Ascending aorta (tissue), 2 donors: ENCODE measurements at regions of chr4 and their contacts with region 1.

Region 1: GRCh38 chr4:107183155-107183774 is 147.2 kb upstream of the DKK2 start:
- DNase-seq: no peak
- H3K4me3 ChIP-seq: no peak overlapping the region
- H3K27ac ChIP-seq: no peak overlapping the region
- H3K4me1 ChIP-seq: no peaks in the 10 kb centered on the region
- H3K27me3 ChIP-seq: no peaks in the 10 kb centered on the region
- CTCF ChIP-seq: peak; percentile 62 to 81 (median 74)

Region 2: GRCh38 chr4:106266201-106266600 is 917.1 kb before region 1 on chr4:
- intact Hi-C with region 1: loop called (anchors 5 kb)
- DNase-seq: no peak
- H3K4me3 ChIP-seq: no peak overlapping the region
- H3K27ac ChIP-seq: no peak overlapping the region
- H3K4me1 ChIP-seq: peaks cover 0 to 6% of the 10 kb centered on the region in 2 donors
- H3K27me3 ChIP-seq: no peaks in the 10 kb centered on the region
- CTCF ChIP-seq: peak; percentile 18 to 59 (median 58)

Region 3: GRCh38 chr4:107037199-107037584 is 146.1 kb before region 1 on chr4:
- intact Hi-C with region 1: loop called (anchors 5 kb)
- DNase-seq: peak in 1 of 2 donors; percentile 68
- H3K4me3 ChIP-seq: peak overlapping the region; percentile 49 to 75
- H3K27ac ChIP-seq: no peak overlapping the region
- H3K4me1 ChIP-seq: no peaks in the 10 kb centered on the region
- H3K27me3 ChIP-seq: no peaks in the 10 kb centered on the region
- CTCF ChIP-seq: peak; percentile 25 to 65 (median 54)

Region 4: GRCh38 chr4:107050525-107051135 is 132.6 kb before region 1 on chr4:
- intact Hi-C with region 1: loop called (anchors 5 kb)
- DNase-seq: no peak
- H3K4me3 ChIP-seq: no peak overlapping the region
- H3K27ac ChIP-seq: no peak overlapping the region
- H3K4me1 ChIP-seq: no peaks in the 10 kb centered on the region
- H3K27me3 ChIP-seq: no peaks in the 10 kb centered on the region
- CTCF ChIP-seq: peak in 2 of 3 experiments; percentile 32 to 44

Region 5: GRCh38 chr4:107243141-107243781 is 60.0 kb after region 1 on chr4:
- intact Hi-C with region 1: no loop called
- DNase-seq: no peak
- H3K4me3 ChIP-seq: no peak overlapping the region
- H3K27ac ChIP-seq: no peak overlapping the region
- H3K4me1 ChIP-seq: no peaks in the 10 kb centered on the region
- H3K27me3 ChIP-seq: no peaks in the 10 kb centered on the region
- CTCF ChIP-seq: no peak